HEK293T (cell line): ENCODE measurements at regions of chr7 and their contacts with region 1.

Region 1: GRCh38 chr7:135160098-135160857 is 10.2 kb downstream of the CYREN start:
- DNase-seq: peak; percentile 4

Region 2: DNA sequence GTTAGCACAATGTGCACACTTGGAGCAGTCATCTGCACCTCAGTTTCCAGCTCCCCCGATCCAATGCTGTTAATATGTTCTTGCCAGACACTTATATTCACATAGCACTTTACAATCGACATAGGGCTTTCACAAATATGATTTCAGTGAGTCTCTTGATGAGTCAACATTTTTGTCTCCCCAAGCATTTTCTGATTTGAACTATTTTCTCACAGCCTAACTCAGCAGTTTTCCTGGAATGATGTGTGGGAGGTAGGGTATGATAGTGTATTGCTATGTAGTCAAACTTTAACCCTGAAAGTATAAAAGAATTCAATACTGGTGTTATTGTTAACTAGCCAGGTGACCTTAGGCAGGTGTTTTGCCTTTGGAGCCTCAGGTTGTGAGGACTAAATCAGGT is 1115.6 kb before region 1 on chr7:
- CTCF ChIA-PET with region 1: no interaction called
- POLR2A ChIA-PET with region 1: no interaction called
- DNase-seq: no peak

Region 3: GRCh38 chr7:135170274-135170997 is 10.2 kb after region 1 on chr7 and contains the start of gene CYREN:
- CTCF ChIA-PET with region 1: interaction called, 5 read pairs
- POLR2A ChIA-PET with region 1: interaction called, 12 read pairs
- DNase-seq: peak; percentile 99

Region 4: GRCh38 chr7:135308583-135309327 is 148.5 kb after region 1 on chr7:
- CTCF ChIA-PET with region 1: no interaction called
- POLR2A ChIA-PET with region 1: no interaction called
- DNase-seq: no peak